ENCODE measurements at regions of chr12 and their contacts with region 1.

Region 1: DNA sequence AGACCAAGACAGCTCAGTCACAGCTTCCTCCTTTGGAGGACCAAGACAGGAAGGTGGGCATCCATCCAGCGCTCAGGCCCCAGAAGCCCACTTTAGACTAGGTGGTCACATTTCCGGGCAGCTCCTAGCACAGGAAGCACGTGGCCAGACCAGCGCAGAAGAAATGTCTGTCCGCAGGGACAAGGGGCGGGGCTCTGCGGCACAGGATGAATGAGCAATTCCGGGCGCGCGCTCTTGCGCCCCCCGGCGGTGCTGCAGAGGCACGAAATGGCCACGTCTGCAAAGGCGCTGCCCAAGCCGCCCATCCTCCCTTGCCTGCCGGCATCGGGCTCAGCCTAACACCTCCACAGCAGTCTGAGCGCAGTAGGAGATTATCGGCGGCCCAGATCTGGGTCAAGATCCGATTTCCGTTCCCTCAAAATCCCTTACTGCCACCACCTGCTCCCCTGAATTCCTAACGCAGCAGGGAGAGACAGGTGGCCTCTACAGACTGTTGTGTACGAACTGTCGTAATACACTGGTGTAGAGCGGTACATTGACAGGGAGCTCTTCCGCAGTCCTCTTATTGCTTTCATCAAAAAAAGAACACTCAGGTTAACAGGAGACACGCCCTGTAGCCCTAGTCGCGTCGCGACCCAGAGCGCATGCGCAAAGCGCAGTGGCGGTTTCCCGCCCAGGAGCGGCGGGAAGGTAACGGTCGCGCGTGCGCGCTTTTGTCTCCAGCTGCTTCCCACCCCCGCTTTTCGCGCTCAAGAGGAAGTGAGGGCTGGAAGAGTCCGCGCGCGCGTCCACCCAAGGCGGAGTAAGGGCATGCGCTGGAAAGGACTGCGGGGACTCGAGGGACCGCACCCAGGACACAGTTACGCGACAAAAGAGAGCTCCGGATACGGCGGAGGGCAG is 794 bp downstream of the TUBA1B start:
- DNase-seq: peak; percentile 79 to 97 (median 87)
- ATAC-seq: peak; percentile 74
- H3K4me3 ChIP-seq: peak overlapping the region; percentile 84
- H3K27ac ChIP-seq: peak overlapping the region; percentile 96
- H3K4me1 ChIP-seq: peaks cover 17 to 27% of the 10 kb centered on the region in 2 experiments; a peak in 4 of 5 replicates
- H3K27me3 ChIP-seq: no peaks in the 10 kb centered on the region
- CTCF ChIP-seq: peak; percentile 89 to 96 (median 89)
- EP300 ChIP-seq: peak; percentile 62; the same call in 1 of the 2 replicates
- POLR2A ChIP-seq: no peak
- RAD21 ChIP-seq: peak; percentile 66 to 72

Region 2: DNA sequence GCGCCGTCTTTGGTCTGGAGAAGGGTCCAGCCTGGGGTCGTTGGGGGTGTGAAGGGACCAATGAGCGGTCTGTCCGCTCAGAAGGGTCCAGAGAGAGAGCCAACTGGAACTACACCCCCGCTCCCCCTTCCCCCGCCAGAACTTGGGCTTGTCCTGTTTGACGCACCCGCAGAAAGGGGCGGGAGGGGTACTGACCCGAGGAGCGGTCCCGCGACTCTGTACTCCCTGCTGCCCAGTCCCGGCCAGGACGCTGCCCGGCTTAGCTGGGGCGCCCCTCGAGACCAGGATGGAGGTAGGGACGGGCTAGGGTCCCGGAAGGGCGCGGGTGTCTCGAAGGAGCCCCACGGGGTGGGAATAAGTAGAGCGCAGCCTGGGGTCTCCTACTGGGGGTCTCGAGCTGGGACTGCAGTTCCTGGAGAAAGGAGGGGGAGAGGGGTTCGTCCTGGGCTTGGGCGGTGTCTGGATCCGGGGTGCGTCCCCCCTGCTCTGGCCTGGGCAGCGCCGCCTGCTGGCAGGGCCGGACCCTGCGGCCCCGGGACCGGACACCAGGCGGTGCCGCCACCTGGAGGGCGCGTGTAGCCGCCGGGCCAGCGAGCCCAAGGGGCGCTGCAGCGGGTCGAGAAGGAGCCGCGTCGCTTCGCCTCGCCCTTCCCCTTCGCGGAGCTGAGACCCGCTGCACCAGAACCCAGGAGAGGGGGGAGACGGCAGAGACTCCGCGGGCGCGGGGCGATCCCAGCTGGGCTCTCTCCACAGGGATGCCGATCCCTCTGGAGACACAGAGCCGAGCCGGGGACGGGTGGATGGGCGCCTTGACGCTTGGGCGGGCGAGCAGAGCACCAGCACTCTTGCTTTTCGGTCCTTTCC is 315.9 kb before region 1 on chr12:
- CTCF ChIA-PET with region 1: no interaction called
- POLR2A ChIA-PET with region 1: no interaction called
- in situ Hi-C with region 1: no loop called
- intact Hi-C with region 1: no loop called
- DNase-seq: peak; percentile 90 to 96 (median 94)
- ATAC-seq: peak; percentile 92
- H3K4me3 ChIP-seq: peak overlapping the region; percentile 65
- H3K27ac ChIP-seq: peak overlapping the region; percentile 61
- H3K4me1 ChIP-seq: peaks cover 4 to 38% of the 10 kb centered on the region in 2 experiments; a peak in 3 of 5 replicates
- H3K27me3 ChIP-seq: peaks cover 0 to 15% of the 10 kb centered on the region in 2 experiments; a peak in 2 of 5 replicates
- CTCF ChIP-seq: peak; percentile 99 to 100 (median 100)
- EP300 ChIP-seq: no peak
- POLR2A ChIP-seq: peak; percentile 80
- RAD21 ChIP-seq: peak; percentile 50 to 68

Region 3: GRCh38 chr12:49069507-49070346 is 60.7 kb before region 1 on chr12 and contains the start of gene RHEBL1:
- CTCF ChIA-PET with region 1: no interaction called
- POLR2A ChIA-PET with region 1: interaction called, 21 read pairs
- in situ Hi-C with region 1: no loop called
- intact Hi-C with region 1: loop called (anchors 5 kb)
- DNase-seq: peak; percentile 99
- ATAC-seq: peak; percentile 100
- H3K4me3 ChIP-seq: peak within 1 kb of the TSS; percentile 96
- H3K27ac ChIP-seq: peak within 1 kb of the TSS; percentile 79
- H3K4me1 ChIP-seq: peaks cover 10 to 18% of the 10 kb centered on the region in 2 experiments; a peak in 4 of 5 replicates
- H3K27me3 ChIP-seq: no peaks in the 10 kb centered on the region
- CTCF ChIP-seq: peak; percentile 43 to 58 (median 57)
- EP300 ChIP-seq: no peak
- POLR2A ChIP-seq: peak; percentile 74
- RAD21 ChIP-seq: no peak
- polyA plus RNA-seq, gene RHEBL1: 27.4 to 36.1 TPM

Region 4: GRCh38 chr12:49105608-49106007 is 24.8 kb before region 1 on chr12:
- CTCF ChIA-PET with region 1: no interaction called
- POLR2A ChIA-PET with region 1: interaction called, 112 read pairs
- in situ Hi-C with region 1: no loop called
- intact Hi-C with region 1: loop called (anchors 2 kb)
- DNase-seq: no peak
- ATAC-seq: no peak
- H3K4me3 ChIP-seq: no peak overlapping the region
- H3K27ac ChIP-seq: no peak overlapping the region
- H3K4me1 ChIP-seq: peaks cover 10 to 21% of the 10 kb centered on the region in 2 experiments; a peak in 4 of 5 replicates
- H3K27me3 ChIP-seq: no peaks in the 10 kb centered on the region
- CTCF ChIP-seq: no peak
- EP300 ChIP-seq: no peak
- POLR2A ChIP-seq: no peak
- RAD21 ChIP-seq: no peak

Region 5: GRCh38 chr12:49161092-49161795 is 30.8 kb after region 1 on chr12:
- CTCF ChIA-PET with region 1: no interaction called
- POLR2A ChIA-PET with region 1: interaction called, 17 read pairs
- in situ Hi-C with region 1: no loop called
- intact Hi-C with region 1: no loop called
- DNase-seq: peak in 1 of 4 experiments; percentile 7
- ATAC-seq: no peak; the same call in 2 of the 3 replicates
- H3K4me3 ChIP-seq: no peak overlapping the region
- H3K27ac ChIP-seq: no peak overlapping the region
- H3K4me1 ChIP-seq: peaks cover 5 to 6% of the 10 kb centered on the region in 2 experiments; a peak in 3 of 5 replicates
- H3K27me3 ChIP-seq: no peaks in the 10 kb centered on the region
- CTCF ChIP-seq: no peak
- EP300 ChIP-seq: no peak
- POLR2A ChIP-seq: peak; percentile 88
- RAD21 ChIP-seq: no peak

Region 6: GRCh38 chr12:49225556-49226181 is 95.3 kb after region 1 on chr12:
- CTCF ChIA-PET with region 1: no interaction called
- POLR2A ChIA-PET with region 1: interaction called, 15 read pairs
- in situ Hi-C with region 1: no loop called
- intact Hi-C with region 1: no loop called
- DNase-seq: peak in 1 of 4 experiments; percentile 59
- ATAC-seq: peak; percentile 87
- H3K4me3 ChIP-seq: no peak overlapping the region
- H3K27ac ChIP-seq: no peak overlapping the region
- H3K4me1 ChIP-seq: peaks cover 0 to 12% of the 10 kb centered on the region in 2 experiments; a peak in 3 of 5 replicates
- H3K27me3 ChIP-seq: no peaks in the 10 kb centered on the region
- CTCF ChIP-seq: peak; percentile 46 to 59 (median 47)
- EP300 ChIP-seq: no peak
- POLR2A ChIP-seq: no peak
- RAD21 ChIP-seq: peak; percentile 34 to 50

Region 7: DNA sequence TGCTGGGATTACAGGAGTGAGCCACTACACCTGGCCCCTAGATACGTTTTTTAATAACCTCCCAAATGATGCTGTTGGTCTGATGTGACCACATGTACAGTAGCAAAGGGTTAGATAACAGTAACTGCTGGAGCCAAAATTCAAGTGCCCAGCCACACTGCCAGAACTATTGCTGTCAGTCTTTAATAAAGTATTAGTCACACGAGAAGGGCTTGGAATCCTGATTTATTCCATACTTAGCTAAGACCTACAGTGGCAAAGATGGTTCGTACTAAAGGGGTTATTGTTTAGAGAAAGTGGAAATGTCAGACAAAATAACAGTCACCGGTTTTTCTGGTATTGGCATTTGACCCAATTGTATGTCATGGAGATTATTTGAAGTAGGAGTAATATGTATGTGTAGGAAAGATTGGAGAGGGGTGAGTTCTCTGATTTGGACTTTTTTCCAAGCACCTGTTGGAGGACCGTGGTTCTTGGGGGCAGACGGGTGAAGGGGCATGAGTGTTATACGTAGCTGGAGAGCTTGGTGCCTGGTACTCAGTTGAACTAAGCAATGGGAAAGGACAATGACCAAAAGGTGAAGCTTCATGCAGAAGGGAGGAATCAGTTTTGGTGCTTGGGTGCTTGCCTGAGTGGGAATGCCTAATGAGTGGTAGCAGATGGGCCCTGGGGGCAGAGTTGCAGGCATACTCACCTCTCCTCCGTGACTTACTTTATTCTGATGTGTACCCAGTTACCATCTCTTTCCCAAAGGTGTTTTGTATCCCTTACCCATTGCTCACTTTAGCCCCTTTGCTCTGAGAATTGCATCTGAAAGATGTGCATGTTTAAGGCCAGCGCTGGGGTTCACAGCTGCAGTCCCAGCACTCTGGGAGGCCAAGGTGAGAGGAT is 144.2 kb after region 1 on chr12:
- CTCF ChIA-PET with region 1: no interaction called
- POLR2A ChIA-PET with region 1: interaction called, 13 read pairs
- in situ Hi-C with region 1: no loop called
- intact Hi-C with region 1: loop called (anchors 10 kb)
- DNase-seq: no peak
- ATAC-seq: peak; percentile 27
- H3K4me3 ChIP-seq: no peak overlapping the region
- H3K27ac ChIP-seq: no peak overlapping the region
- H3K4me1 ChIP-seq: peaks cover 6 to 7% of the 10 kb centered on the region in 2 experiments; a peak in 3 of 5 replicates
- H3K27me3 ChIP-seq: no peaks in the 10 kb centered on the region
- CTCF ChIP-seq: no peak
- EP300 ChIP-seq: no peak
- POLR2A ChIP-seq: no peak; the same call in 1 of the 2 replicates
- RAD21 ChIP-seq: no peak

Measured in K562 (cell line).